Naive thymus-derived CD4-positive, alpha-beta T cell (primary cell): ENCODE measurements at regions of chr4 and their contacts with region 1.

Region 1: DNA sequence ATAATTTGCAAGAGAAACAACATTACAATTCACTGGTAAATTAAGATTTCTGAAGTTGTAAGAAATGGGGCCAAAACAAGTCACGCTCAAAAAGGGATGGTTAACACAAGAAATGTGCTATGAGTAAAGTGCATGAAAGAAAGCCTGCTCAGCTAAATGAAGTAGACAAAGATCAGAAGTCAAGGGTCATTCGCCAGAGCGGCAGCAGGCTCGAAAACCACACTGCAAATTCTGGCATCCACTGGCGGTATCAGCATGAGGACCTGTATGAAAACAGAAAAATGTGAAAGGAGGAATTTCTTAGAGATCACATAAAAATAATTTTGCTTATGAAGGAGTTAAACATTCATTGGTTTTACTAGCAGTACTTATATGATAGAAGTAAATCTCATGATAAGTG is 49.6 kb downstream of the FBXL5 start:
- DNase-seq: no peak
- ATAC-seq: no peak
- H3K4me3 ChIP-seq: no peak overlapping the region
- H3K4me3 Mint-ChIP-seq: no peak overlapping the region
- H3K27ac ChIP-seq: no peak overlapping the region
- H3K27ac Mint-ChIP-seq: no peak overlapping the region
- H3K4me1 ChIP-seq: no peaks in the 10 kb centered on the region
- H3K4me1 Mint-ChIP-seq: peaks cover 0 to 13% (median 5%) of the 10 kb centered on the region in 7 donors
- H3K27me3 ChIP-seq: no peaks in the 10 kb centered on the region
- H3K27me3 Mint-ChIP-seq: no peaks in the 10 kb centered on the region

Region 2: DNA sequence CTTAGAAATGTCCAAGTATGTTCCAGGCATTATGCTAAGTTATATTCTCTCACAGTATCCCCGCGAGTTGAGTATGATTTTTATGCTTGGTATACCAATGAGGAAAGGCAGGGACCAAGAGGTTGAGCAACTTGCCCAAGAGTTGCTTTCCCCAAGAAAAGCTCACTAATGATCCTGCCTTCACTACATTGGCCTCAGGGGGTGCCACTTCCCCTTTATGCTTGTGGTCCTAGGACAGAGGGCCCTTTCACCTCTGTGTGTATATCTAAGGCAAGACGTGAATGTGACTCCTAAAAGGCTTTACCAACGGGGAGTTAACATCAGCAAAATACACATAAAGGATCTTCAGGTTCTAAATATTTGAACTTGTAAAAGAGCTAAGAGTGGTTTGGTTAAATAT is 767.7 kb before region 1 on chr4:
- CTCF ChIA-PET with region 1: no interaction called
- POLR2A ChIA-PET with region 1: no interaction called
- intact Hi-C with region 1: no loop called
- DNase-seq: no peak
- ATAC-seq: no peak
- H3K4me3 ChIP-seq: no peak overlapping the region
- H3K4me3 Mint-ChIP-seq: no peak overlapping the region
- H3K27ac ChIP-seq: no peak overlapping the region
- H3K27ac Mint-ChIP-seq: no peak overlapping the region
- H3K4me1 ChIP-seq: no peaks in the 10 kb centered on the region
- H3K4me1 Mint-ChIP-seq: no peaks in the 10 kb centered on the region
- H3K27me3 ChIP-seq: no peaks in the 10 kb centered on the region
- H3K27me3 Mint-ChIP-seq: peaks cover 0 to 12% (median 0%) of the 10 kb centered on the region in 5 donors

Region 3: GRCh38 chr4:15525054-15525453 is 80.5 kb before region 1 on chr4:
- CTCF ChIA-PET with region 1: no interaction called
- POLR2A ChIA-PET with region 1: interaction called, 12 read pairs
- intact Hi-C with region 1: no loop called
- DNase-seq: no peak
- ATAC-seq: no peak
- H3K4me3 ChIP-seq: no peak overlapping the region
- H3K4me3 Mint-ChIP-seq: no peak overlapping the region
- H3K27ac ChIP-seq: no peak overlapping the region
- H3K27ac Mint-ChIP-seq: no peak overlapping the region
- H3K4me1 ChIP-seq: no peaks in the 10 kb centered on the region
- H3K4me1 Mint-ChIP-seq: no peaks in the 10 kb centered on the region
- H3K27me3 ChIP-seq: no peaks in the 10 kb centered on the region
- H3K27me3 Mint-ChIP-seq: no peaks in the 10 kb centered on the region

Region 4: DNA sequence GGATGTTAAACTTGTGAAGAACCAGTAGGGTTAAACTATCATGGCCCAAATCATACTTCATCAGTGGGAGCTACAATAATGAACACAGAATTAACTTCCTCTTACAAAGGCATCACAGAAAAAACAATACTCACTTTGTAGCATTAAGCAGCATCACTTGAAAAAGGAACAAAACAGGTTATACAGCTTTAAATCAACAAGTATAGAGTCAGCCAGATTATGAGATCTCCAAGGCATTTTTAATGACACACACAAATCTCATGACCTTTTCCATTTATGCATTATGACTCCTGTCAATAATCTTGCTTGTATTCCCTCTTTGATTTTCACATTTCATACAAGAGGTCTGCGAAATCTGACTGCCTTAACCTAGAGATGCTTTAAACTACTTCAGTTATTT is 31.3 kb after region 1 on chr4:
- CTCF ChIA-PET with region 1: no interaction called
- POLR2A ChIA-PET with region 1: no interaction called
- intact Hi-C with region 1: no loop called
- DNase-seq: no peak
- ATAC-seq: no peak
- H3K4me3 ChIP-seq: no peak overlapping the region
- H3K4me3 Mint-ChIP-seq: no peak overlapping the region
- H3K27ac ChIP-seq: no peak overlapping the region
- H3K27ac Mint-ChIP-seq: no peak overlapping the region
- H3K4me1 ChIP-seq: no peaks in the 10 kb centered on the region
- H3K4me1 Mint-ChIP-seq: peaks cover 0 to 25% (median 10%) of the 10 kb centered on the region in 7 donors
- H3K27me3 ChIP-seq: no peaks in the 10 kb centered on the region
- H3K27me3 Mint-ChIP-seq: no peaks in the 10 kb centered on the region

Region 5: GRCh38 chr4:16450724-16451123 is 845.2 kb after region 1 on chr4:
- CTCF ChIA-PET with region 1: no interaction called
- POLR2A ChIA-PET with region 1: no interaction called
- intact Hi-C with region 1: no loop called
- DNase-seq: no peak
- ATAC-seq: no peak
- H3K4me3 ChIP-seq: no peak overlapping the region
- H3K4me3 Mint-ChIP-seq: no peak overlapping the region
- H3K27ac ChIP-seq: no peak overlapping the region
- H3K27ac Mint-ChIP-seq: no peak overlapping the region
- H3K4me1 ChIP-seq: no peaks in the 10 kb centered on the region
- H3K4me1 Mint-ChIP-seq: no peaks in the 10 kb centered on the region
- H3K27me3 ChIP-seq: no peaks in the 10 kb centered on the region
- H3K27me3 Mint-ChIP-seq: peaks cover 0 to 9% (median 0%) of the 10 kb centered on the region in 5 donors